Activated naive CD4-positive, alpha-beta T cell treated with anti-CD3 and anti-CD28 coated beads for 36 hours (primary cell): ENCODE measurements at regions of chr16 and their contacts with region 1.

Region 1: DNA sequence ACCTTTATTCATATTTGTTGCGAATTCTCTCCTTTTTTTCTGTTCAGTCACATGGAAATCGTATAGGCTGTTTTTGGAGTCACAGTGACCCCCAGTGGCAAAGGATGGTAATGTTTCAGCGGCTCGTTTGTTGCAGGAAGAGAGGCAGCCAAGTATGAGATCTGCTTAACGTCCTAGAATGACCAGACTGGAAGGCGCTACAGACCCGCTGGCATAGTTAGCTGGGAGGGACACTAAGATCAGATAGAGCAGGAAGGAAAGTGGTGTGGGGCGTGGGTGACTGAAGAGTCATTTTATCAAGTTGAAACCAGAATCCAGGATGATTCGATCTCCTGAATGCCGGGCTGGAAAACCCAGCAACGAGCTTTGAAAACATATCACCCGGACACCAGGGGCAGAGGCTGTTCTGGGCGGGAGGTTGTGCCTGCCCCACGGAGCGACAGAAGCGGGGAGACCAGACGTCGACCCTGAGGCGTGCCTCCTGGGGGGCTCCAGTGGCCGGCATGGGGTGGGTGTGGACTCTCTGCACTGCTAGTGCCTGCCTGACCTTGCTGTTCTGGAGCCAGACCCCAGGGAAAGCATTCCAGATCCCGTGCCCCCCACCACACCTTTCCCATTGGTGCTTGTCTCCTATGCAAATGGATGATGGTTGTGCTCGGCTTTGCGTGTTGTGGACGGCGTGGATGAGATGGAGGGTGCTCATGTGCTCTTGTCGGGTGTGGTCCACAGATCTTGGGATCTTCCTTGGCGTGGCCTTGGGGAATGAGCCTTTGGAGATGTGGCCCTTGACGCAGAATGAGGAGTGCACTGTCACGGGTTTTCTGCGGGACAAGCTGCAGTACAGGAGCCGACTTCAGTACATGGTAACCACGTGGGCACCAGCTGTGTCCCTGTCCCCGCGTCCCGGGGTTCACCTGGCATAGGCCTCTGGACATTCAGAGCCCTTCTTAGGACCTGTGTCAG is 7.7 kb downstream of the IL34 start:
- DNase-seq: peak; percentile 93
- H3K4me3 Mint-ChIP-seq: no peak overlapping the region
- H3K27ac Mint-ChIP-seq: no peak overlapping the region
- H3K4me1 Mint-ChIP-seq: peaks cover 5% of the 10 kb centered on the region
- H3K27me3 Mint-ChIP-seq: no peaks in the 10 kb centered on the region

Region 2: DNA sequence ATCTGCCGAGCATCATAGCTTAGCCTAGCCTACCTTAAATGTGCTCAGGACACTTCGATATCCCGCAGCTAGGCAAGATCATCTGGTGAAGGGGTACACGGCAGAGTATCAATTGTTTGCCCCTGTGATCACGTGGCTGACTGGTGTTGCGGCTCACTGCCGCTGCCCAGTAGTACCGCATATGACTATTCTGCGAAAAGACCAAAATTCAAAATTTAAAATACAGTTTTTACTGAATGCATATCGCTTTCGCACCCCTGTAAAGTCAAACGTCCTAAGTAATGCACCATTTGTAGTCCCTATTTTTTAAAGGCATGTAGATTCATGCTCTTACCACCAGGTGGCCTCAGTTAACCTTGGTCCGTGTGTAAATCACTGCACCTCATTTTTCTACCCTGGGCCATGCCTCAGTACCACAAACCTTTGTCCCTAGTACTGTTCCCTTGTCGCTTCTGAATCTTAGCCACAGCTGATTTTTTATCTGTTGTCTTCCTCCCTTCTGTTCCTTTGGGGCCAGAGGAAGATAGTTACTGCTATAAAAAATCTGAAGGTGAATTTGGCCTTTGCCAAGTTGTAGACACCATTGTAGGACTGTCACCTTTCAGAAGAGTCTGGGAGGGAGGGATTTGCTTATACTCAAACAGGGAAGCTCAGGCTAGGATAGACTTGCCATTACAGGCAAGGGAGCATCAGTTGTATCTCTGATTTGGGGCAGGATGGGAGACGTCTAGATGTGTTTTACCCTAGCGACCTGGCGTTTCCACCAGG is 857.6 kb before region 1 on chr16:
- CTCF ChIA-PET with region 1: no interaction called
- intact Hi-C with region 1: loop called (anchors 1 kb)
- DNase-seq: peak; percentile 41
- H3K4me3 Mint-ChIP-seq: no peak overlapping the region
- H3K27ac Mint-ChIP-seq: no peak overlapping the region
- H3K4me1 Mint-ChIP-seq: no peaks in the 10 kb centered on the region
- H3K27me3 Mint-ChIP-seq: no peaks in the 10 kb centered on the region

Region 3: DNA sequence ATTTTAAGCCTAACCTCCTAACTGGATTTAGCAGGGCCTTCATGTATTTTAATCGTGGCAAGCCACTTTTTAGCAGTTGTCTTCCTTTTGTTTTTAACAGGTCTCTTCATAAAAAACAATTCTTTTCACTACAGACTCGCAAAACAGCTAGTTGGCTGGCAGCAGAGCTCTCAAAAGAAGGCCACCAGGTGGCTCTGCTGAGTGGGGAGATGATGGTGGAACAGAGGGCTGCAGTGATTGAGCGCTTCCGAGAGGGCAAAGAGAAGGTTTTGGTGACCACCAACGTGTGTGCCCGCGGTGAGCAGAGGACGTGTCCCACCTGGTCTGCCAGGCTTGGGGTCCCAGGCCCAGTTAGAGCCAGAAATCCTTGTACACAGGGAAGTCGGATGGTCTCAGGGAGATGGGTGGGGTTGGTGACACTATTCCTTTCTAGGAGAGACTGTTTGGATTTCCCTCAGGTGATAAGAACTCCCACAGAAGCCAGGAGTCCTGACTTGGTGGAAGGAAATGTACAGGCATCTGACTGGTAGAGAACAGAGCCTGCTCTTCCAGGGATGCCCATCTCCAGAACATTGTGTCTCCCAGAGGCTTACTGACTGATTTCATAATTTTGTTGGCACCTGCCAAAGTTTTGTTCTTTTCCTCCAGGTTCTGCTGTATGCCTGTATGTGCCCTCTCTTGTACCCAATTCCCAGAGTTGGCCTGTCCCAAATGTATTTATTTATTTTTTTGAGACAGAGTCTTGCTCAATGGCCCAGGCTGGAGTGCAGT is 322.3 kb before region 1 on chr16:
- CTCF ChIA-PET with region 1: interaction called, 15 read pairs
- intact Hi-C with region 1: loop called (anchors 5 kb)
- DNase-seq: peak; percentile 26
- H3K4me3 Mint-ChIP-seq: no peak overlapping the region
- H3K27ac Mint-ChIP-seq: peak overlapping the region; percentile 50
- H3K4me1 Mint-ChIP-seq: no peaks in the 10 kb centered on the region
- H3K27me3 Mint-ChIP-seq: no peaks in the 10 kb centered on the region

Region 4: GRCh38 chr16:70395345-70395901 is 258.7 kb before region 1 on chr16:
- CTCF ChIA-PET with region 1: interaction called, 5 read pairs
- intact Hi-C with region 1: loop called (anchors 1 kb)
- DNase-seq: peak; percentile 80
- H3K4me3 Mint-ChIP-seq: no peak overlapping the region
- H3K27ac Mint-ChIP-seq: no peak overlapping the region
- H3K4me1 Mint-ChIP-seq: peaks cover 3% of the 10 kb centered on the region
- H3K27me3 Mint-ChIP-seq: no peaks in the 10 kb centered on the region

Region 5: DNA sequence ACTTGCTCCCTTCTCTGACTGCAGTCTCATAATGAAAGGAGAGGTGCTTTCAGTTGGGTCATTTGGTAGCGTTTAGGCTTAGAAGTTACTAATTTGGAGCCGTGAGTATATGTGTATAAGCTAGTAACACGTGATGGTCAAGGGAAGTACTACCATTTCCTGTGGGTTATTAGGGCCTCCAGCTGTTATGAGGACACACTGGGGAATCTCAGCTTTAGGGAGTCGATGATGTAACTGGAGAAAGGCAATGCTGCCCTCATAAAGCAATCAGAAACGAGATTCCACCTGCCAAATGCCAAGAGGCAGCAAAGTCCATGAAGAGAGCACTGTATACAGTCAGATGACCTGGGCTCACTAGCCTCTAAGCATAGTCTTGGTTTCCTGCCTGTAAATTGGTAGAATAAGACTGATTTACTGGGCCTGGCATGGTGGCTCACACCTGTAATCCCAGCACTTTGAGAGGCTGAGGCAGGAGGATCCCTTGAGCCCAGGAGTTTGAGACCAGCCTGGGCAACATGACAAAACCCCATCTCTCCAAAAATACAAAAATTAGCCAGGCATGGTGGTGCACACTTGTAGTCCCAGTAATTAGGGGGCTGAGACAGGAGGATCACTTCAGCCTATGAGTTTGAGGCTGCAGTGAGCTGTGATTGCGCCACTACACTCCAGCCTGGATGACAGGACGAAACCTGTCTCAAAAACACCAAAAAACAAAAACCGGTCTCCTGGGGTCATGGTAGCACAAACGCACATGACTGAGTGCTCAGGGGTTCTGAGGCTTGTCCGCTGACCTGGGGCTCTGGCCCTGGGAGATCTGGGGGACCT is 77.4 kb before region 1 on chr16:
- CTCF ChIA-PET with region 1: no interaction called
- intact Hi-C with region 1: loop called (anchors 5 kb)
- DNase-seq: no peak
- H3K4me3 Mint-ChIP-seq: no peak overlapping the region
- H3K27ac Mint-ChIP-seq: peak overlapping the region; percentile 38
- H3K4me1 Mint-ChIP-seq: peaks cover 20% of the 10 kb centered on the region
- H3K27me3 Mint-ChIP-seq: no peaks in the 10 kb centered on the region

Region 6: DNA sequence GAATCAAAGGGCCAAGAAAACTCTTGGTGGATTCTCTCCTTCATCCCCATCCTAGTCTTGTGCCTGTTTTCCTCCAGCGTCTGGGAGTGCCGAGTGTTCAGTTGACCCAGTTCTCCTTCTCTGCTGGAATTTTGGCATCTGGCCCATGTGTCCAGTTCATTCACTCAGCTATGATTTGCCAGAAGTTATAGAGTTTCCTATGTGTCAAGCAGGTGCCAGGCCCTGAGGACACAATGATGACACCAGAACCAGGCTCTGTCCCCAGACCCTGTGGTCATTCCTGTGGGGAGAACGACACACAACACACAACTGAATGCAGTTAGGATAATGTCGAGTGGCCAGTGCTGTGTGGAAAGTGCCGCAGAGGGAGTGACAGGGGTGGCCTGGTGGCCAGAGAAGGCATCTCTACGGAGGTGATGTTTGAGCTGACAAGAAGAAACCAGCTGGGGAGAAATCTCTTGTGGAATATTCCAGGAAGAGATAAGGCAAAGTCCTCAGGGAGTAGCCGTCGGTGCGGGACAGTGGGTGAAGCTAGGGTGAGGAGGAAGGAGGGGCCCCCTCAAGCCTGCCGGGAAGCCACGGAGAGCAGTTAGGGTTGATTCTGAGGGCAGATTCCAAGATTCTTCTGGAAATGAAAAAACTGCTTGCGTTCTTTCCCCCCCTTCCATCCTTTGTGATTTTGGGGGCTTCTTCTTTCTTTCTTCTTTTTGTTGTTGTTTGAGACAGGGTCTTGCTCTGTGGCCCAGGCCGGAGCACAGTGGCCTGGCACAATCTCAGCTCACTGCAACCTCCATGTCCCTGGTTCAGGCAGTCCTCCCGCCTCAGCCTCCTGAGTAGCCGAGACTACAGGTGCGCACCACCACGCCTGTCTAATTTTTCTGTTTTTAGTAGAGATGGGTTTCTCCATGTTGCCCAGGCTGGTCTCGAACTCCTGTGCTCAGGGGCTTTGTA is 43.5 kb before region 1 on chr16:
- CTCF ChIA-PET with region 1: no interaction called
- intact Hi-C with region 1: no loop called
- DNase-seq: no peak
- H3K4me3 Mint-ChIP-seq: no peak overlapping the region
- H3K27ac Mint-ChIP-seq: no peak overlapping the region
- H3K4me1 Mint-ChIP-seq: no peaks in the 10 kb centered on the region
- H3K27me3 Mint-ChIP-seq: no peaks in the 10 kb centered on the region

Region 7: DNA sequence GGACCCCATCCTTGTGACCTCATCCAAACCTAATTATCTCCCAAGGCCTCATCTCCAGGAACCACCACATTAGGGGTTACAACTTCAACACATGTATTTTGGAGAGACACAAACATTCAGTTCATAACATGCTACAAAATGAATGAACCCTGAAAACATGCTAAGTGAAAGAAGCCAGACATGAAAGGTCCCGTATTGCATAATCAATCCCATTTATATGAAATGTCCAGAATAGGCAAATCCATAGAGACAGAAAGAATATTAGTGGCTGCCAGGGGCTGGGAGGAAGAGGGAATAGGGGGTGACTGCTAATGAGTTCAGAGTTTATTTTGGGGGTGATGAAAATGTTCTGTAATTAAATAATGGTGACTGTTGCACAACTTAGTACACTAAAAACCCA is 11.5 kb before region 1 on chr16:
- CTCF ChIA-PET with region 1: no interaction called
- intact Hi-C with region 1: no loop called
- DNase-seq: no peak
- H3K4me3 Mint-ChIP-seq: no peak overlapping the region
- H3K27ac Mint-ChIP-seq: no peak overlapping the region
- H3K4me1 Mint-ChIP-seq: no peaks in the 10 kb centered on the region
- H3K27me3 Mint-ChIP-seq: no peaks in the 10 kb centered on the region

Region 8: GRCh38 chr16:70746708-70747424 is 92.8 kb after region 1 on chr16:
- CTCF ChIA-PET with region 1: no interaction called
- intact Hi-C with region 1: no loop called
- DNase-seq: peak; percentile 80
- H3K4me3 Mint-ChIP-seq: no peak overlapping the region
- H3K27ac Mint-ChIP-seq: peak overlapping the region; percentile 77
- H3K4me1 Mint-ChIP-seq: peaks cover 50% of the 10 kb centered on the region
- H3K27me3 Mint-ChIP-seq: no peaks in the 10 kb centered on the region